ENCODE measurements at regions of chr3 and their contacts with region 1.

Region 1: DNA sequence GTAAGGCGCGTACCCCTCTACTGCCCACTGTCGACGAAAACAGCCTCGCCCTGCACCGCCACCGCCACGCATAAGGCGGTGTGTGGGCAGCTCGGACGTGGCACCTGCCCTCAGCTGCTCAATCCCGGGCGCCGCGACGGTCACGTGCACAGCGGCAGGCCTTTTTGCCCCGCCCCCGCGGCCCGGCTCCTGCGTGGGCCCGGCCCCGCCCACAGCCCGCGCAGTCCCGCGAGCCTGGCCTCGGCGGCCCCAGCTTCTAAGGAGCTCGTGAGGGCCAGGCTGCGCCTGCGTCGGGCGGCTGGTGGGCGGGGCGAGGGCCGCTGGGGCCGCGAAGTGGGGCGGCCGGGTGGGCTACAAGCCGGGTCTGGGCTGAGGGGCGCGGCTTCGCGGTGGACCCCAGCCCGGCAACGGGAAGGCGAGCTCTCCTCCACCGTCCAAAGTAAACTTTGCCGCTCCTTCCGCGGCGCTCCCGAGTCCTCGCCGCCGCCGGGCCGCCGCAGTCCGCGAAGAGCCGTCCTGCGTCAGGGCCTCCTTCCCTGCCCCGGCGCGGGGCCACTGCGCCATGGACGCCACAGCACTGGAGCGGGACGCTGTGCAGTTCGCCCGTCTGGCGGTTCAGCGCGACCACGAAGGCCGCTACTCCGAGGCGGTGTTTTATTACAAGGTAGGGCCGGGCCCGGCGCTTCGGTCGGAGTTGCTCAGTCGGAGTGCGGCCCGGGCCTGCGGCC is at the start of gene CAPN7:
- DNase-seq: peak; percentile 88 to 98 (median 93)
- ATAC-seq: peak; percentile 91
- H3K4me3 ChIP-seq: peak within 1 kb of the TSS; percentile 79 to 82
- H3K4me3 Mint-ChIP-seq: peak within 1 kb of the TSS; percentile 89
- H3K27ac ChIP-seq: peak within 1 kb of the TSS; percentile 85 to 88
- H3K27ac Mint-ChIP-seq: peak within 1 kb of the TSS; percentile 87
- H3K4me1 ChIP-seq: peaks cover 21% of the 10 kb centered on the region
- H3K4me1 Mint-ChIP-seq: peaks cover 32% of the 10 kb centered on the region
- H3K27me3 ChIP-seq: no peaks in the 10 kb centered on the region
- H3K27me3 Mint-ChIP-seq: no peaks in the 10 kb centered on the region
- CTCF ChIP-seq: no peak
- total RNA-seq, gene CAPN7: 59.7 to 62.6 TPM

Region 2: DNA sequence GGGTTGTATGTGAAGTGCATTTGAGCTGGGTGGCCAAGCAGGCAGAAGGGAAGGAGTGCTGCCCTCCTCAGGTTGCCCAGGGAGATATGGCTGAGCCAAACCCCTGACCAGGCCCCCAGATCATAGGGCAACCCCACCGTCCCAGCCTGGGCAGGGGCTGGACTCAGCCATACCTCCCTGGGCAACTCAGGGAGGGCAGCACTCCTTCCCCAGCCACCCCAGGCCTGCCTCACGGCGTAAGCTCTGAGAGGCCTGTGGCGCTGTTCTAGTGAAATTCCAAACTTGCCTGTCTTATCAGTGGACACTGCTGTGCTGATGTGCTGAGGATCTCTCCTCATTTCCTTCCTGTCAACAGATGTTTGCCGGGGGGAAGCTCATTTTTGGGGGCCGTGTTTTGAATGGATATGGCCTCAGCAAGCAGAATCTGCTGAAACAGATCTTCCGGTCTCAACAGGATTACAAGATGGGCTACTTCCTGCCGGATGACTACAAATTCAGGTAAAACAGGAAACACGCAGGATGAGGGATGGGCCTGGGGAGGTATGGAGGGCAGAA is 444.9 kb before region 1 on chr3:
- CTCF ChIA-PET with region 1: no interaction called
- POLR2A ChIA-PET with region 1: no interaction called
- intact Hi-C with region 1: no loop called
- DNase-seq: no peak
- ATAC-seq: no peak
- H3K4me3 ChIP-seq: no peak overlapping the region
- H3K4me3 Mint-ChIP-seq: no peak overlapping the region
- H3K27ac ChIP-seq: no peak overlapping the region
- H3K27ac Mint-ChIP-seq: no peak overlapping the region
- H3K4me1 ChIP-seq: no peaks in the 10 kb centered on the region
- H3K4me1 Mint-ChIP-seq: peaks cover 3% of the 10 kb centered on the region
- H3K27me3 ChIP-seq: no peaks in the 10 kb centered on the region
- H3K27me3 Mint-ChIP-seq: no peaks in the 10 kb centered on the region
- CTCF ChIP-seq: no peak

Region 3: DNA sequence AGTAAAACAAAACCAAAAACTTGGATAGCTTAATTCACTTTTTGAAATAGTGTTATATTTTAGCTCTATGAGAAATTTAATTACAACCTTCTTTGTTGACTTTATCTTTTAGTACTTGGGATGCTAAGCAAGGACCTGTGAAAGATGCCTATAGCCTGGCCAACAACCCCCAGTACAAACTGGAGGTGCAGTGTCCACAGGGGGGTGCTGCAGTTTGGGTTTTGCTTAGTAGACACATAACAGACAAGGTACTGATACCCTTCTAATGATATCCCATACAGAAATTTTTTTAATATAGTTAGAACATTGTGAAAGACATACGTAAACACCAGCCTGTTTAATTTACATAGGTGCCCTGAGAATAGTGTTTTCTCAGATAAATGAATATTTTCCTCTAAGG is 35.2 kb after region 1 on chr3:
- CTCF ChIA-PET with region 1: interaction called, 6 read pairs
- POLR2A ChIA-PET with region 1: no interaction called
- intact Hi-C with region 1: loop called in 1 of 2 experiments (anchors 5 kb)
- DNase-seq: peak in 6 of 9 experiments; percentile 15 to 68 (median 44)
- ATAC-seq: peak; percentile 62
- H3K4me3 ChIP-seq: no peak overlapping the region
- H3K4me3 Mint-ChIP-seq: no peak overlapping the region
- H3K27ac ChIP-seq: no peak overlapping the region
- H3K27ac Mint-ChIP-seq: no peak overlapping the region
- H3K4me1 ChIP-seq: no peaks in the 10 kb centered on the region
- H3K4me1 Mint-ChIP-seq: no peaks in the 10 kb centered on the region
- H3K27me3 ChIP-seq: no peaks in the 10 kb centered on the region
- H3K27me3 Mint-ChIP-seq: no peaks in the 10 kb centered on the region
- CTCF ChIP-seq: no peak

Region 4: GRCh38 chr3:15399970-15400369 is 193.9 kb after region 1 on chr3:
- CTCF ChIA-PET with region 1: interaction called, 69 read pairs
- POLR2A ChIA-PET with region 1: interaction called, 3 read pairs
- intact Hi-C with region 1: loop called (anchors 1 kb)
- DNase-seq: peak in 5 of 9 experiments; percentile 1 to 41 (median 22)
- ATAC-seq: peak; percentile 54
- H3K4me3 ChIP-seq: no peak overlapping the region
- H3K4me3 Mint-ChIP-seq: peak overlapping the region; percentile 4
- H3K27ac ChIP-seq: no peak overlapping the region
- H3K27ac Mint-ChIP-seq: no peak overlapping the region
- H3K4me1 ChIP-seq: peaks cover 13% of the 10 kb centered on the region
- H3K4me1 Mint-ChIP-seq: peaks cover 17% of the 10 kb centered on the region
- H3K27me3 ChIP-seq: no peaks in the 10 kb centered on the region
- H3K27me3 Mint-ChIP-seq: no peaks in the 10 kb centered on the region
- CTCF ChIP-seq: no peak

Region 5: GRCh38 chr3:15557511-15557946 is 351.4 kb after region 1 on chr3:
- CTCF ChIA-PET with region 1: interaction called, 6 read pairs
- POLR2A ChIA-PET with region 1: no interaction called
- intact Hi-C with region 1: loop called (anchors 1 to 2 kb)
- DNase-seq: peak in 7 of 9 experiments; percentile 8 to 80 (median 43)
- ATAC-seq: peak; percentile 99
- H3K4me3 ChIP-seq: no peak overlapping the region
- H3K4me3 Mint-ChIP-seq: no peak overlapping the region
- H3K27ac ChIP-seq: no peak overlapping the region
- H3K27ac Mint-ChIP-seq: no peak overlapping the region
- H3K4me1 ChIP-seq: peaks cover 3% of the 10 kb centered on the region
- H3K4me1 Mint-ChIP-seq: peaks cover 16% of the 10 kb centered on the region
- H3K27me3 ChIP-seq: no peaks in the 10 kb centered on the region
- H3K27me3 Mint-ChIP-seq: no peaks in the 10 kb centered on the region
- CTCF ChIP-seq: peak; percentile 76

Region 6: DNA sequence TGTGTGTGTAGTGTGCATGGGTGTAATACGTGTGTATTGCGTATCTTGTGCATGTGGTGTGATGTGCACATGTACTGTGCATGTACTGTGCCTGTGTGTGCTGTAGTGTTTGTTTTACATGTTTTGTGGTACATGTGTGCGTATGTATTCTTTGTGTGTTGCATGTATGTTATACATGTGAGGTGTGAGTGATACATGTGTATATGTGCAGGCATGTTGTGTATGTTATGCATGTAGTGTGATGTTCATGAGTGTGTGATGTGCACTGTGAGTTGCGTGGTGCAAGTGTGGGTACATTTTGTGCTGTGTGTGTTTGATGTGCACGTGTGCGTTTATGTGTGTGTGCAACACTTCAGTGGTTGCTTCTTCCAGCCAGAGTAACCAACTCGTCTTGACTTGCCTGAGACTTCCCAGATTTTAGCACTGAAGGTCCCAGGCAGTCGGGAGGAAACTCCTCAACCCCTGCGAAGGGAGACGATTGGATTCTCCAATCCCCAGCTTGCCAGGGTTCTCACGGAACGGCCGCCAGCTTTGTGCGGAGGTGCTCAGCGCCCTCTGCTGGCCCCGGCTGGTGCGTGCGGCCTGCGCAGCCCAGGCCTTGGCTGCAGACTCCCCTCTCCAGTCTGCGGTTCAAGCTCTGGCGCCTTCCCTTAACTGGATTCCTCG is 972.0 kb after region 1 on chr3:
- CTCF ChIA-PET with region 1: no interaction called
- POLR2A ChIA-PET with region 1: no interaction called
- intact Hi-C with region 1: loop called in 1 of 2 experiments (anchors 5 kb)
- DNase-seq: peak; percentile 12 to 67 (median 53)
- ATAC-seq: peak; percentile 62
- H3K4me3 ChIP-seq: no peak overlapping the region
- H3K4me3 Mint-ChIP-seq: no peak overlapping the region
- H3K27ac ChIP-seq: no peak overlapping the region
- H3K27ac Mint-ChIP-seq: no peak overlapping the region
- H3K4me1 ChIP-seq: no peaks in the 10 kb centered on the region
- H3K4me1 Mint-ChIP-seq: peaks cover 3% of the 10 kb centered on the region
- H3K27me3 ChIP-seq: no peaks in the 10 kb centered on the region
- H3K27me3 Mint-ChIP-seq: peaks cover 18% of the 10 kb centered on the region
- CTCF ChIP-seq: peak; percentile 73